ENCODE measurements at regions of chr6 and their contacts with region 1.

Region 1: DNA sequence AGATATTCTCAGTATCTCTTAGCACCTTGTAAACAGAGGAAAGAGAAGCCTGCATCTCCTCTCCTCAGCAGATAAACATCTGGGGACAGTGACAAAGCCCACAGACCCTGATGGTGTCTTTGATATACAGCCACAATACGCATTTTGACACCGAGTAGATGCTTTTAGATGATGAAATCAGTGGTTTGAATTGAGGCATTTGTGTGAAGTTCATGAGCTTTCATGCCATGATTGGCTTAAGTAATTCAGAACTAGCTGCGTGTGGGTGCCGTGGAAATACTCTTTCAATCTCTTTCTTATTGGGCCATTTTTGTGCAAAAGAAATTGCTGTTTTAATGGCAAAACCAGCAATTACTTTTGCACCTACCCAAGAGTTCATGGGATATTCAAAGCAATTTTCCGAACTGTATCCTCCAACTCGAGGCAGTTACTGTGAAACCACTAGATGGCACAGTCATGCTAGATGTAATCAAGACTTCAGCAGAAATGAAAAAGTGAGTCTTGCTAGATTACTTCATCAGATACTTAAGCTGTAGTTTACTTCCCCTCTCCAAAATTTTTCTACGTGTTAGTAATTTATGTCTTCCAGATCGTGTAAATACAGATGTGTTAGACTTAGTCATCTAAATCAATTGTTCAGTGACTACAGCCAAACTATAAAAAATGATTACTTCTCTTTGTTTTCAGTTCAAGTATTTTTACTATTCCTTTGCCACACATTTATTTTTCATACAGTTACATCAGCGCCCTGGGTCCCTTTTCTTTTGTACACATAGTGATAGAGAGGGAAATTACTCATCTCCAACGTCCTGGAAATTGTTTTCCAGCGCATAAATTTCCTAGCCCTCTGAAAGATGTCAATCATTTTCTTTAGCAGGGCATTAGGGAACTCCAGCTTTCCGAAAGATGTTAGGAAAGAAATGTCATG is 49.4 kb downstream of the IYD start:
- DNase-seq: peak; percentile 26
- H3K4me3 Mint-ChIP-seq: peak overlapping the region; percentile 72
- H3K27ac Mint-ChIP-seq: peak overlapping the region; percentile 80
- H3K4me1 Mint-ChIP-seq: peaks cover 47% of the 10 kb centered on the region
- H3K27me3 Mint-ChIP-seq: peaks cover 33% of the 10 kb centered on the region

Region 2: DNA sequence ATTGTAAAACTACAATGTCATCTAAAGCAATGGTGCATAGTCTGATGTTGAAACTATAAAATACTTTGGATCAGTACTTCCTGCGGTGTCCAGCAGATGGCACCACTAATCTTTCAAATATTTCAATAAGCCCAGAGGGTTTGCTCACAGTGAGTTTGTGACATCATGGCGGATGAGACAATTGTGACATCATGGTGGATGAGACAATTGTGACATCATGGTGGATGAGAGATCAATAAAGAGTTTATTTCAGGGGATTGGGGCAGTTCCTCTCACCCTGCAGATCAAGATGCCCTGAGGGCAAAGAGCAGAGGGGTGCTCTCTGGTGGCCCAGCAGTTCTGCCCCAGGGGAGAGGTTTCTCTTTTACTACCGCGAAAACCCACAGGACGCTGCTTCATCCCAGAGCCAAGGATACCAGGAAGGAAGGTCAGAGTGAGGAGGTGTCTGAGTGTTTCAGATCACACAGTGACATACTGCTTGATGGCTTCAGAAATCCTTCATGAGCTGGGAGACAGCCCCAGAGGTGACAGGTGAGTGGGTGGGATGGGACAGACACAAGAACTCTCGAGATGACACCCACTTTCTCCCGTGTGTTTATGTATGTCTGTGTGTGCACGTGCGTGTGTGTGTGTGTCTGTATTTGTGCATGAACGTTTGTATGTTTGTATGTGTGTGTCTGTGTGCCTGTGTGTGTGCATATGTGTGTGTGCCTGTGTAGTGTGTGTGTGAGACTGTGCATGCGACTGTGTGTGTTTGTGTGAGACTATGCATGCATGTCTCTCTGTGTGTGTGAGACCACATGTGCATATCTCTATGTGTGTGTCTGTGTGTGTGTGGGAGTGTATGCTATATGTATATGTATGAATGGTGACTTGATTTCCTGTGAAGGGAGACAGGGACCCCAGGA is 483.7 kb before region 1 on chr6:
- intact Hi-C with region 1: loop called (anchors 10 kb)
- DNase-seq: peak; percentile 60
- H3K4me3 Mint-ChIP-seq: no peak overlapping the region
- H3K27ac Mint-ChIP-seq: no peak overlapping the region
- H3K4me1 Mint-ChIP-seq: peaks cover 21% of the 10 kb centered on the region
- H3K27me3 Mint-ChIP-seq: peaks cover 82% of the 10 kb centered on the region

Region 3: GRCh38 chr6:150243620-150244314 is 174.4 kb before region 1 on chr6:
- intact Hi-C with region 1: loop called (anchors 5 kb)
- DNase-seq: no peak
- H3K4me3 Mint-ChIP-seq: no peak overlapping the region
- H3K27ac Mint-ChIP-seq: no peak overlapping the region
- H3K4me1 Mint-ChIP-seq: peaks cover 28% of the 10 kb centered on the region
- H3K27me3 Mint-ChIP-seq: peaks cover 3% of the 10 kb centered on the region

Region 4: GRCh38 chr6:150491131-150491810 is 73.1 kb after region 1 on chr6:
- intact Hi-C with region 1: loop called (anchors 1 kb)
- DNase-seq: no peak
- H3K4me3 Mint-ChIP-seq: no peak overlapping the region
- H3K27ac Mint-ChIP-seq: peak overlapping the region; percentile 23
- H3K4me1 Mint-ChIP-seq: peaks cover 14% of the 10 kb centered on the region
- H3K27me3 Mint-ChIP-seq: peaks cover 18% of the 10 kb centered on the region

Region 5: GRCh38 chr6:150813319-150813992 is 395.3 kb after region 1 on chr6:
- intact Hi-C with region 1: loop called (anchors 1 kb)
- DNase-seq: no peak
- H3K4me3 Mint-ChIP-seq: no peak overlapping the region
- H3K27ac Mint-ChIP-seq: peak overlapping the region; percentile 24
- H3K4me1 Mint-ChIP-seq: peaks cover 18% of the 10 kb centered on the region
- H3K27me3 Mint-ChIP-seq: peaks cover 24% of the 10 kb centered on the region

Region 6: DNA sequence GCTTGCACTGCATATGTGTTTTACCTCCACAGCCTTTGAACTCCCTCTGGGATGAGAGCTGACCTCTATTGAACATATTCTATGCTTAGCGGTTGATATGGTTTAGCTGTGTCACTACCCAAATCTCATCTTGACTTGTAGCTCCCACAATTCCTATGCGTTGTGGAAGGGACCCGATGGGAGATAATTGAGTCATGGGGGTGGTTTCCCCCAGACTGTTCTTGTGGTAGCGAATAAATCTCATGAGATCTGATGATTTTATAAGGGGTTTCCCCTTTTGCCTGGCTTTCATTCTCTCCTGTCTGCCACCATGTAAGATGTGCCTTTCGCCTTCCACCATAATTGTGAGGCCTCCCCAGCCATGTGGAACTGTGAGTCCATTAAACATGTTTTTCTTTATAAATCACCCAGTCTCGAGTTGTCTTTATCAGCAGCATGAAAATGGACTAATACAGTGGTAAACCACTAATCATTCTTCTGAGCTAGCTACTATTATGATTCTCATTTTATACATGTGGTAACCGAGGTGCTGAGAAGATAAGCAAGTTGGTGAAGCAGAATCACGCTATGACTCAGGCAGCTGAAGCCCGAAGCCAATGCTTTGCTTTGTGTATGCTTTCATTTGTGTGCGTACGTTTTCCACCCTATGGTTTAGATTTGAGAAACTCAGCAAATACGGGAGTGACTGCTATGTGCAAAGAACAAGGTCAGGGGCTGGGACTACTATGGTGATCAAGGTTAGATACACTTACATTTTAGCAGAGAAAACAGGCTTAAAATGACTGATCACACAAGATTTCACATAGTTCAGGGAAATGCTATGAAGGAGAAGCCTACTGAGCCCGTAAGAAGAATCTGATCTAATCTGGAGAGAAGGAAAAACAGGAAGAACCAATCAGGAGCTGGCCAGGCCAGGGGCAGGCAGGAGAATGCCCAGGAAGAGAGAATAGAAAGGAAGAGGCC is 1752.8 kb after region 1 on chr6:
- intact Hi-C with region 1: loop called (anchors 5 kb)
- DNase-seq: peak; percentile 68
- H3K4me3 Mint-ChIP-seq: peak overlapping the region; percentile 38
- H3K27ac Mint-ChIP-seq: peak overlapping the region; percentile 93
- H3K4me1 Mint-ChIP-seq: peaks cover 27% of the 10 kb centered on the region
- H3K27me3 Mint-ChIP-seq: no peaks in the 10 kb centered on the region

Measured in activated T-helper 2 cell treated with anti-CD3 and anti-CD28 coated beads, Interferon-gamma antibody, Interleukin-2, Interleukin-4, amounts not matched to agents 10 μg/mL and 5 μg/mL and 100 μg/mL, durations not matched to agents 14 hours and 24 hours and 36 hours (primary cell).